ENCODE measurements at regions of chr7 and their contacts with region 1.

Region 1: GRCh38 chr7:39948956-39949928 is 814 bp upstream of the CDK13 start:
- DNase-seq: peak; percentile 100
- H3K4me3 ChIP-seq: peak overlapping the region; percentile 76
- H3K27ac ChIP-seq: peak overlapping the region; percentile 94
- H3K4me1 ChIP-seq: peaks cover 21% of the 10 kb centered on the region
- H3K27me3 ChIP-seq: no peaks in the 10 kb centered on the region
- CTCF ChIP-seq: no peak

Region 2: GRCh38 chr7:39623018-39623731 is 326.1 kb before region 1 on chr7 and contains the start of gene RALA:
- CTCF ChIA-PET with region 1: no interaction called
- POLR2A ChIA-PET with region 1: interaction called, 3 read pairs
- intact Hi-C with region 1: loop called (anchors 1 kb)
- DNase-seq: peak; percentile 90 to 96
- H3K4me3 ChIP-seq: peak within 1 kb of the TSS; percentile 75
- H3K27ac ChIP-seq: peak within 1 kb of the TSS; percentile 87
- H3K4me1 ChIP-seq: peaks cover 42% of the 10 kb centered on the region
- H3K27me3 ChIP-seq: no peaks in the 10 kb centered on the region
- CTCF ChIP-seq: no peak
- total RNA-seq, gene RALA: 34.3 and 36.8 TPM in 2 replicates

Region 3: GRCh38 chr7:39894904-39895303 is 54.3 kb before region 1 on chr7:
- CTCF ChIA-PET with region 1: interaction called, 4 read pairs
- POLR2A ChIA-PET with region 1: interaction called, 6 read pairs
- intact Hi-C with region 1: loop called (anchors 2 kb)
- DNase-seq: no peak
- H3K4me3 ChIP-seq: no peak overlapping the region
- H3K27ac ChIP-seq: no peak overlapping the region
- H3K4me1 ChIP-seq: peaks cover 29% of the 10 kb centered on the region
- H3K27me3 ChIP-seq: no peaks in the 10 kb centered on the region
- CTCF ChIP-seq: no peak

Region 4: DNA sequence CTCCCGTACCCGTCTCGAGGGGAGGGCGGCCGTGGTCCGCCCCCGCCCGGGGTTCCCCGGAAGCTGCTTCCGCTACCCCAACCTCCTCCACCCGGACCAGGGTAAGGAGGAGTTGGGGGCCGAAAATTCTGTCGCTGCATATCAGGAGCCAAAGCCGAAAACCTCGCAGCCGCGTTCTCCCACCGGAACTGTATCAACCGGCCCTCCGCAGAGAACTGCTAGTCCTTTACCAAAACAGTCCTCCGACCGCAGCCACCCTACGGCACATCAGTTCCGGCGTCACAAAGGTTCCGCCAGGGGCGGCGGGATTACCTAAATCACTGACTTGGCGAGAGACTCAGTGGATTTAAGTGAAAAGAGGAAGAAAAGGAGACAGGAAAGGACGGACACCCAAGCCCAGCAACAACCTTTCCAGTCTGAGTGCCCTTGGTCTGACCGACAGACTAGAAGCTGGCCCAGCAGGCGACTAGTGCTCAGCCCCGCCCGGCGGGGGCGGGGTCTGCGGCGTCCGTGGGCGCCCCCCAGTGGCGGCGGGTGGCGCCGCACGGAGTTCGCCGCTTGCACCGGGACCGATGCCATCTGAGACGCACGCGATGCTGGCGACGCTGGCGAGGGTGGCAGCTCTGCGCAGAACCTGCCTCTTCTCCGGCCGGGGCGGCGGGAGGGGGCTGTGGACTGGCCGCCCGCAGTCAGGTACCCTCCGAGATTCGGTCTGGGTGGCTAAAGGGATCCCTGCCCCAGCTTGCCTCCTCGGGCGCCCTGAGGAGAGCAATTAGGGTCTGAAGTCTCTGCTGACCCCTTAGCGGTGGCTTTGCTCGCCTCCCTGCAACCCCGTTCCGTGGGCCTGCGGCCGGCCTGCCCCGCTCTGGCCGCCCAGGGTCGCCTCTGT is 185.4 kb after region 1 on chr7 and contains the starts of genes MPLKIP and SUGCT:
- CTCF ChIA-PET with region 1: no interaction called
- POLR2A ChIA-PET with region 1: no interaction called
- intact Hi-C with region 1: loop called (anchors 2 kb)
- DNase-seq: peak; percentile 80 to 90
- H3K4me3 ChIP-seq: peak within 1 kb of the TSS; percentile 97
- H3K27ac ChIP-seq: peak within 1 kb of the TSS; percentile 75
- H3K4me1 ChIP-seq: peaks cover 17% of the 10 kb centered on the region
- H3K27me3 ChIP-seq: no peaks in the 10 kb centered on the region
- CTCF ChIP-seq: peak; percentile 99
- total RNA-seq, gene MPLKIP: 76.0 and 79.2 TPM in 2 replicates
- total RNA-seq, gene SUGCT: 2.7 and 3.5 TPM in 2 replicates

Region 5: GRCh38 chr7:40276061-40276460 is 326.8 kb after region 1 on chr7:
- CTCF ChIA-PET with region 1: no interaction called
- POLR2A ChIA-PET with region 1: no interaction called
- intact Hi-C with region 1: no loop called
- DNase-seq: no peak
- H3K4me3 ChIP-seq: no peak overlapping the region
- H3K27ac ChIP-seq: no peak overlapping the region
- H3K4me1 ChIP-seq: no peaks in the 10 kb centered on the region
- H3K27me3 ChIP-seq: no peaks in the 10 kb centered on the region
- CTCF ChIP-seq: no peak

Measured in PC-9 (cell line).